ENCODE measurements at regions of chr9 and their contacts with region 1.

Region 1: GRCh38 chr9:20684035-20684872 is at the start of gene FOCAD:
- DNase-seq: peak; percentile 87 to 98
- H3K4me3 ChIP-seq: peak within 1 kb of the TSS; percentile 89 to 100
- H3K27ac ChIP-seq: peak within 1 kb of the TSS; percentile 94 to 98
- H3K4me1 ChIP-seq: peaks cover 0 to 13% of the 10 kb centered on the region in 2 donors
- H3K27me3 ChIP-seq: no peaks in the 10 kb centered on the region
- CTCF ChIP-seq: no peak
- total RNA-seq, gene FOCAD: 64.3 TPM

Region 2: DNA sequence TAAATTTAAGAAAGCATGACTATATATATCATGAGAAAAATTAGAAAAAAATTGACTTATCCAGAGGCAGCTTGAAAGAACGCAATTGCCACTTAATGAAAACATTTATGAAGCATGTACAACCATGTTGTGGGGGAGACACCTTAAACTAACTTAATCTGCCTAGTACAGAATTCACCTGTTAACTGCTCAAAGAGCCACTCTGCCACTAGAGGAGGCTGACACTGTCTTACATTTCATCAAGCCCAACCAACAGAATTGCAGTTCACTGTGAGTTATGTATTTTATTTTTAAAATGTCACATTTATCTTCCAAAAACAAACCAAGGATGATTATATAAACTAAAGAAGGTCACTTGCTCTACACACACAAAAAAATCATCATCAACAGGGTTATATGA is 314.9 kb before region 1 on chr9:
- intact Hi-C with region 1: no loop called
- DNase-seq: no peak
- H3K4me3 ChIP-seq: no peak overlapping the region
- H3K27ac ChIP-seq: no peak overlapping the region
- H3K4me1 ChIP-seq: no peaks in the 10 kb centered on the region
- H3K27me3 ChIP-seq: no peaks in the 10 kb centered on the region
- CTCF ChIP-seq: no peak

Region 3: GRCh38 chr9:20599195-20599594 is 85.1 kb before region 1 on chr9:
- intact Hi-C with region 1: no loop called
- DNase-seq: no peak
- H3K4me3 ChIP-seq: no peak overlapping the region
- H3K27ac ChIP-seq: no peak overlapping the region
- H3K4me1 ChIP-seq: peaks cover 0 to 7% of the 10 kb centered on the region in 2 donors
- H3K27me3 ChIP-seq: no peaks in the 10 kb centered on the region
- CTCF ChIP-seq: no peak

Region 4: DNA sequence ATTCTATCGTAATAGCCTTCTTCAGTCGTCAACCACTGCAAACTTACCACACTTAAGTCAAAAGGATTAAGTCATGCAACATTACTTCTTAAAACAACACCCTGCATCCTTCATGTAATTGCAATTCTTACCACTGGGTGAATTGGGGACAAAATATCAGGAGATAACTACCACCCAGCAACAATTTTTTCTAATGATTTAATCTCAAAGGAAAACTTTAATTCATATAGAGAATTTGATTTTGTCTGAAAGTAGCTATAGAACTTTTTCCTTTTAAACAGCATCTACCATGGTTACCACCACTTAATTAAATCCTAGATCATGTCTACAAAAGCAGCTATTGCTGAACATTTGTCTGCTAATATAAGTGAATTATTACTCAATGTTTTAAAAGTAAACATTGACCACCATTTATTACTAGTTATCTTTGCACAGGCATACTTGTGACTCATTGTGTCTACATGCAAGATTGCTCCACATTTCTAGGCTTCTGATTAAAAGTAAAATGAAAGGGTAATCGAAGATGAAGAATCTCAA is 72.4 kb before region 1 on chr9:
- intact Hi-C with region 1: loop called (anchors 1 kb)
- DNase-seq: no peak
- H3K4me3 ChIP-seq: no peak overlapping the region
- H3K27ac ChIP-seq: peak overlapping the region in 1 of 2 donors; percentile 5
- H3K4me1 ChIP-seq: no peaks in the 10 kb centered on the region
- H3K27me3 ChIP-seq: no peaks in the 10 kb centered on the region
- CTCF ChIP-seq: peak in 2 of 3 experiments; percentile 32 to 42

Region 5: DNA sequence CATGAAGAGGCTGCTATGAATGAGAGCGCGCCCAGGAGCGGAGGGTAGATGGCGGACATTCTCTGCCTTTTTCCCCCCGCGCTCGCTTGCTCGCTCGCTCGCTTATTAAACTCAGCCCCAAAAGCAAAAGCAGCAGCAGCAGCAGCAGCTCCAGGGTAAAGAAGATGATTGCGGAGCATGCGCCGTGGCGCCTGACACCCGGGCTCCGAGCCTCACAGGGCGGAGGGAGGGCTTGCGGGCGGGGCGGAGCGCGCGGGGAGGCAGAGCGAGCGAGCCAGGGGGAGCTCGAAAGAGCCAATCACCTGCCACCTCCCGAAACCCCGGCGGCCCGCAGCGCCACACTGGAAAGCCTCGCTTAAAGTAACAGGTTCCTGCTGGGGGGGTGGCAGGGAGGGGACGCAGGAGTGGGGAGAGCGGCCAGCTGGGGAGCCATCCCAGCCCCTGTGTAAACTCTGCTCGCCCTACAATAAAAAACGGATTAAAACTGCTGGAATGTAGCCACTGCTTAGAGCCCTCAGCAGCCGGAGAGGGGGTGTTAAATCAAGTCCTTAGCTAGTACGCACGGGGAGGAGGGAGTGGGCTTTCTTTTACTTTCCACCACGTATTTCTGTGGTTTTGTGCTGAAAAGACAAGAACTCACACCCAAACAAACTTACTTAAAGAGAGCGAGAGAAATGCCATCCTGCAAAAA is 61.8 kb before region 1 on chr9 and contains the start of gene MLLT3:
- intact Hi-C with region 1: loop called (anchors 1 kb)
- DNase-seq: peak; percentile 82 to 98
- H3K4me3 ChIP-seq: peak within 1 kb of the TSS; percentile 89
- H3K27ac ChIP-seq: peak within 1 kb of the TSS; percentile 69 to 91
- H3K4me1 ChIP-seq: peaks cover 3 to 8% of the 10 kb centered on the region in 2 donors
- H3K27me3 ChIP-seq: no peaks in the 10 kb centered on the region
- CTCF ChIP-seq: no peak
- total RNA-seq, gene MLLT3: 16.8 TPM

Region 6: DNA sequence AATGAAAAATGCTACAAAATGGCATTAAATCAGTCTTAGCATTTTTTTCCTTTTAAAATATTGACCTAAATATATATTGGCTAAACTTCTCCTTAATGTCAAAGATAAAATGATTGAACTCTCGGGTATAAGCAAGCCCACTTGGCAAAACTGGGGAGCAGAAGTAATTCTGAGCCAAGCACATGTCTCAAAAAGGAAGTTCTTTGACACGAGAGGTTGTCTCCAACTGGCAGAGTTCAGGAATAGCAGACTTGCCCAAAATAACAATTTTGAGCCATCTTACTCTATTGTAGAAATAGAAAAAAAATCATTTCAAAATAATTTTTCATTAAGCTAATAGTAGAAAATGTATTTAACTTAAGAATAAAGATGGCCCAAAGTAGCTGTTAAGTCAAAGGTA is 51.5 kb before region 1 on chr9:
- intact Hi-C with region 1: no loop called
- DNase-seq: no peak
- H3K4me3 ChIP-seq: no peak overlapping the region
- H3K27ac ChIP-seq: no peak overlapping the region
- H3K4me1 ChIP-seq: no peaks in the 10 kb centered on the region
- H3K27me3 ChIP-seq: no peaks in the 10 kb centered on the region
- CTCF ChIP-seq: no peak

Region 7: GRCh38 chr9:20980832-20981455 is 296.7 kb after region 1 on chr9:
- intact Hi-C with region 1: loop called (anchors 10 kb)
- DNase-seq: no peak
- H3K4me3 ChIP-seq: peak overlapping the region; percentile 26 to 31
- H3K27ac ChIP-seq: peak overlapping the region; percentile 64 to 71
- H3K4me1 ChIP-seq: peaks cover 4 to 20% of the 10 kb centered on the region in 2 donors
- H3K27me3 ChIP-seq: no peaks in the 10 kb centered on the region
- CTCF ChIP-seq: no peak

Region 8: GRCh38 chr9:21802195-21803000 is 1118.1 kb after region 1 on chr9 and contains the start of gene MTAP:
- intact Hi-C with region 1: loop called (anchors 10 kb)
- DNase-seq: peak; percentile 70 to 94
- H3K4me3 ChIP-seq: peak within 1 kb of the TSS; percentile 91 to 99
- H3K27ac ChIP-seq: peak within 1 kb of the TSS; percentile 87 to 91
- H3K4me1 ChIP-seq: peaks cover 0 to 10% of the 10 kb centered on the region in 2 donors
- H3K27me3 ChIP-seq: no peaks in the 10 kb centered on the region
- CTCF ChIP-seq: no peak
- total RNA-seq, gene MTAP: 34.7 TPM

Measured in ascending aorta (tissue), 2 donors.